Transverse colon (tissue), 4 donors: ENCODE measurements at regions of chr18 and their contacts with region 1.

Region 1: GRCh38 chr18:72147830-72148229 is 396.3 kb downstream of the CBLN2 start:
- DNase-seq: no peak
- H3K4me3 ChIP-seq: no peak overlapping the region
- H3K27ac ChIP-seq: no peak overlapping the region
- H3K4me1 ChIP-seq: no peaks in the 10 kb centered on the region
- H3K27me3 ChIP-seq: no peaks in the 10 kb centered on the region
- CTCF ChIP-seq: no peak
- EP300 ChIP-seq: no peak
- POLR2A ChIP-seq: no peak

Region 2: DNA sequence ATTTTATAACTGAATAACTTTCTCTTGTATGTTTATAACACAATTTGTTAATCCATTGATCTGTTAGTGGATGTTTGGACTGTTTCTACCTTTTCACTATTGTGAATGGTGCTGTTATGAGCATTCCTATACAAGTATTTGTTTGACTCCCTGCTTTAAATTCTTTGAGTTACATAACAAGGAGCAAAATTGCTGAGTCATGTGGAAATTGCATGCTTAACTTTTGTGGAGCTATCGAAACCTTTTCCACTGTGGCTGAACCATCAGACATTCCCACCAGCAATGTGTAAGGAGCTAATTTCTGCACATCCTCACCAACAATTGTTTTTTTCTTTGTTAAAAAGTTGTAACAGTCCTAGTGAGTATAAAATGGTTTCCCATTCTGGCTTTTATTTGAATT is 19.2 kb before region 1 on chr18:
- in situ Hi-C with region 1: no loop called
- intact Hi-C with region 1: loop called (anchors 2 kb)
- DNase-seq: no peak
- H3K4me3 ChIP-seq: no peak overlapping the region
- H3K27ac ChIP-seq: no peak overlapping the region
- H3K4me1 ChIP-seq: no peaks in the 10 kb centered on the region
- H3K27me3 ChIP-seq: no peaks in the 10 kb centered on the region
- CTCF ChIP-seq: no peak
- EP300 ChIP-seq: no peak
- POLR2A ChIP-seq: no peak